Endothelial cell of umbilical vein (primary cell): ENCODE measurements at regions of chr1 and their contacts with region 1.

Region 1: GRCh38 chr1:231757101-231757404 is 130.5 kb downstream of the DISC1 start:
- DNase-seq: no peak
- H3K4me3 ChIP-seq: no peak overlapping the region
- H3K27ac ChIP-seq: no peak overlapping the region
- H3K4me1 ChIP-seq: no peaks in the 10 kb centered on the region
- H3K27me3 ChIP-seq: no peaks in the 10 kb centered on the region
- CTCF ChIP-seq: no peak
- POLR2A ChIP-seq: no peak

Region 2: GRCh38 chr1:231743966-231744365 is 13.1 kb before region 1 on chr1:
- CTCF ChIA-PET with region 1: interaction called, 25 read pairs
- POLR2A ChIA-PET with region 1: no interaction called
- dilution Hi-C with region 1: no loop called
- intact Hi-C with region 1: no loop called
- DNase-seq: no peak
- H3K4me3 ChIP-seq: no peak overlapping the region
- H3K27ac ChIP-seq: no peak overlapping the region
- H3K4me1 ChIP-seq: no peaks in the 10 kb centered on the region
- H3K27me3 ChIP-seq: no peaks in the 10 kb centered on the region
- CTCF ChIP-seq: no peak
- POLR2A ChIP-seq: no peak

Region 3: GRCh38 chr1:231781892-231782291 is 24.8 kb after region 1 on chr1:
- CTCF ChIA-PET with region 1: interaction called, 29 read pairs
- POLR2A ChIA-PET with region 1: no interaction called
- dilution Hi-C with region 1: no loop called
- intact Hi-C with region 1: no loop called
- DNase-seq: peak; percentile 88
- H3K4me3 ChIP-seq: peak overlapping the region in 1 of 3 experiments; percentile 23
- H3K27ac ChIP-seq: peak overlapping the region; percentile 67
- H3K4me1 ChIP-seq: peaks cover 13% of the 10 kb centered on the region
- H3K27me3 ChIP-seq: no peaks in the 10 kb centered on the region
- CTCF ChIP-seq: no peak
- POLR2A ChIP-seq: no peak

Region 4: DNA sequence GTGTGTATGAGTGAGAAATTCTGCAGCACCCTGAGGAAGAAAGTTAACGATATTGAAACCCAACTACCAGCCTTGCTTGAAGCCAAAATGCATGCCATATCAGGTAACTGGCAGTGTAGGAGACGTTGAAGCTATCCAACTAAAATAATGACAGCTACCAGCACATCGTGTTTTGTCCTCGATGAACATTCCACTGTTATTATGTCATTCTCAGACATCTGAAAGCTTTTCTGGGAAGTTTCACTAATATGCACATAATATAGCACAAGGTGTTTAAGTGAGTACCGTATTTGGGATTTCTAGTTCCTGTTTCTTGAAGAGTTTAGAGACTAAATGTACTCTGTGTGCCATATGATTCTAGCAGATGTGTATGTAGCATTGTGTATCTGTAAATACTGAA is 43.1 kb after region 1 on chr1:
- CTCF ChIA-PET with region 1: interaction called, 24 read pairs
- POLR2A ChIA-PET with region 1: no interaction called
- dilution Hi-C with region 1: no loop called
- intact Hi-C with region 1: no loop called
- DNase-seq: no peak
- H3K4me3 ChIP-seq: no peak overlapping the region
- H3K27ac ChIP-seq: no peak overlapping the region
- H3K4me1 ChIP-seq: peaks cover 5% of the 10 kb centered on the region
- H3K27me3 ChIP-seq: no peaks in the 10 kb centered on the region
- CTCF ChIP-seq: no peak
- POLR2A ChIP-seq: no peak

Region 5: GRCh38 chr1:231844986-231845502 is 88.0 kb after region 1 on chr1:
- CTCF ChIA-PET with region 1: interaction called, 19 read pairs
- POLR2A ChIA-PET with region 1: no interaction called
- dilution Hi-C with region 1: no loop called
- intact Hi-C with region 1: no loop called
- DNase-seq: peak; percentile 73
- H3K4me3 ChIP-seq: no peak overlapping the region
- H3K27ac ChIP-seq: no peak overlapping the region
- H3K4me1 ChIP-seq: peaks cover 9% of the 10 kb centered on the region
- H3K27me3 ChIP-seq: no peaks in the 10 kb centered on the region
- CTCF ChIP-seq: no peak
- POLR2A ChIP-seq: no peak

Region 6: GRCh38 chr1:232186931-232187330 is 429.9 kb after region 1 on chr1:
- CTCF ChIA-PET with region 1: no interaction called
- POLR2A ChIA-PET with region 1: no interaction called
- dilution Hi-C with region 1: no loop called
- intact Hi-C with region 1: loop called (anchors 10 kb)
- DNase-seq: no peak
- H3K4me3 ChIP-seq: no peak overlapping the region
- H3K27ac ChIP-seq: no peak overlapping the region
- H3K4me1 ChIP-seq: no peaks in the 10 kb centered on the region
- H3K27me3 ChIP-seq: no peaks in the 10 kb centered on the region
- CTCF ChIP-seq: no peak
- POLR2A ChIP-seq: no peak